Caco-2 (cell line): ENCODE measurements at regions of chr9 and their contacts with region 1.

Region 1: GRCh38 chr9:15277400-15278090 is 29.5 kb downstream of the TTC39B start:
- DNase-seq: peak in 1 of 2 experiments; percentile 30
- H3K4me3 ChIP-seq: no peak overlapping the region
- H3K4me3 Mint-ChIP-seq: no peak overlapping the region
- H3K27ac Mint-ChIP-seq: no peak overlapping the region
- H3K4me1 ChIP-seq: peaks cover 17% of the 10 kb centered on the region
- H3K4me1 Mint-ChIP-seq: no peaks in the 10 kb centered on the region
- H3K27me3 ChIP-seq: no peaks in the 10 kb centered on the region
- H3K27me3 Mint-ChIP-seq: no peaks in the 10 kb centered on the region
- CTCF ChIP-seq: peak in 1 of 2 experiments; percentile 36

Region 2: GRCh38 chr9:15211160-15211814 is 66.3 kb before region 1 on chr9:
- CTCF ChIA-PET with region 1: no interaction called
- POLR2A ChIA-PET with region 1: no interaction called
- intact Hi-C with region 1: loop called (anchors 5 kb)
- DNase-seq: peak; percentile 49 to 75
- H3K4me3 ChIP-seq: no peak overlapping the region
- H3K4me3 Mint-ChIP-seq: no peak overlapping the region
- H3K27ac Mint-ChIP-seq: no peak overlapping the region
- H3K4me1 ChIP-seq: 0 out of 2 replicates have a peak, but pooled peaks cover 4% of the 10 kb centered on the region
- H3K4me1 Mint-ChIP-seq: peaks cover 7% of the 10 kb centered on the region
- H3K27me3 ChIP-seq: no peaks in the 10 kb centered on the region
- H3K27me3 Mint-ChIP-seq: no peaks in the 10 kb centered on the region
- CTCF ChIP-seq: peak; percentile 71 to 79

Region 3: GRCh38 chr9:15306757-15307534 is 29.4 kb after region 1 on chr9 and contains the start of gene TTC39B:
- CTCF ChIA-PET with region 1: interaction called, 5 read pairs
- POLR2A ChIA-PET with region 1: no interaction called
- intact Hi-C with region 1: loop called (anchors 1 kb)
- DNase-seq: peak; percentile 88 to 93
- H3K4me3 ChIP-seq: peak within 1 kb of the TSS; percentile 74
- H3K4me3 Mint-ChIP-seq: peak within 1 kb of the TSS; percentile 92
- H3K27ac Mint-ChIP-seq: peak within 1 kb of the TSS; percentile 79
- H3K4me1 ChIP-seq: peaks cover 4% of the 10 kb centered on the region; the same call in 1 of the 2 replicates
- H3K4me1 Mint-ChIP-seq: peaks cover 7% of the 10 kb centered on the region
- H3K27me3 ChIP-seq: no peaks in the 10 kb centered on the region
- H3K27me3 Mint-ChIP-seq: no peaks in the 10 kb centered on the region
- CTCF ChIP-seq: no peak
- total RNA-seq, gene TTC39B: 6.9 and 7.6 TPM in 2 replicates

Region 4: GRCh38 chr9:15357050-15357653 is 79.6 kb after region 1 on chr9:
- CTCF ChIA-PET with region 1: interaction called, 5 read pairs
- POLR2A ChIA-PET with region 1: no interaction called
- intact Hi-C with region 1: loop called (anchors 5 kb)
- DNase-seq: peak in 1 of 2 experiments; percentile 29
- H3K4me3 ChIP-seq: no peak overlapping the region
- H3K4me3 Mint-ChIP-seq: no peak overlapping the region
- H3K27ac Mint-ChIP-seq: no peak overlapping the region
- H3K4me1 ChIP-seq: peaks cover 5% of the 10 kb centered on the region; the same call in 1 of the 2 replicates
- H3K4me1 Mint-ChIP-seq: peaks cover 18% of the 10 kb centered on the region
- H3K27me3 ChIP-seq: no peaks in the 10 kb centered on the region
- H3K27me3 Mint-ChIP-seq: no peaks in the 10 kb centered on the region
- CTCF ChIP-seq: no peak